GM10248 (cell line): ENCODE measurements at regions of chr12 and their contacts with region 1.

Region 1: DNA sequence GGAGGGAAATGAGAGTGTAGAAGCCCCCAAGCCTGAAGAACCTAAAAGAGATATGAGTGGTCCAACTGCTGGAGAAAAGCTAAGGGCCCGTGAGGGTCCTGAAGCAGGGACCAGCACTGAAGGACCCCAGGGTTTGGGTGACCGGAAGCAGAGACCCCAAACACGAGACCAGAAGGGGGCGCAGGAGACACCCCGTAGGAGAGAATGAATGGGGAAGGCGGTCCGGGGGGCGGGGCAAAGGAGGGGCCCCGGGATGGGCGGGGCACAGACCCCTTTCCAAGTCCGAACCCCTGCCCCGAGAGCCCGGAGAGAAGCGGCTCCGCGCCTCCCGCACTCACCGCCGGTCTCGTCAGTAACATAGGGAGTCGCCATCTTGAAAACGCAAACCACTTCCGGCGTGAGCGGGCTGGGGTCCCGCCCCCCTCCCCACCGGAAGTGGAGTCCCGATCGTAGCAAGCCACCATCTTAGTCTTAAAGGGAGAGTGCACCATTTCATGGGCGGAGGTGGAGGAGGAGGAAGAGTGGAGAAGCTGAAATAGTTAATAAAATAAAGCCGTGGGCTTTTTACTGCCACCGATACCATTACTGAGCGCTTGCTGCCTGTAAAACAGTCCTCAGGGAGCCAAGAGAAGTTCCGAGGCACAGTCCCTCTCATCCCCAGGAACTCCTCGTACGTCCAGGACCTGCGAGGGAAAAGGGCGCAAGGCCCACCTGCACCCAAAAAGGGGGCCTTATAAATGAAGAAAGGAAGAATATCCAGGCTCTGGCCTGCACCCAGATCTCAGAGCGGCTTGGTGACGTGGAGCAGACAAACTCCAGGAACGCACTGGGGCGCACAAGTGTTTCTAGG is 731 bp downstream of the PYM1 start:
- DNase-seq: peak; percentile 91
- CTCF ChIP-seq: peak; percentile 72

Region 2: GRCh38 chr12:55707841-55708694 is 218.9 kb before region 1 on chr12 and contains the start of gene ITGA7:
- CTCF ChIA-PET with region 1: no interaction called
- POLR2A ChIA-PET with region 1: no interaction called
- DNase-seq: peak; percentile 81
- CTCF ChIP-seq: no peak

Region 3: GRCh38 chr12:55829967-55830600 is 96.9 kb before region 1 on chr12:
- CTCF ChIA-PET with region 1: interaction called, 14 read pairs
- POLR2A ChIA-PET with region 1: interaction called, 4 read pairs
- DNase-seq: peak; percentile 51
- CTCF ChIP-seq: no peak

Region 4: DNA sequence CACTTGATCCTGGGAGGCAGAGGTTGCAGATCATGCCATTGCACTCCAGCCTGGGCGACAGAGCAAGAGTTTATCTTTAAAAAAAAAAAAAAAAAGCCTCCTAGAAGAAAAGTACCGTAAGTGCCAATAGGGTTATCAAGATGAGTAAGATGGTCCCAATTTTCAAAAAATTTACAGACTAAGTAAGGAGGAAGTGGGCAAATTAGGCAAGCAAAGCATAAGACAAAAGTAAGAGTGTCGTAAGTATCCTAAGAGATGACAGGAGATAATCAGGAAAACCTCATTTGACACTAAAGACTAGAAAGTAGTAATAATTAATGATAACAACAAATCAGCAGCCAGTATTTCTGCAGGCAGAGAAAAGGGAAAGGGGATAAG is 11.5 kb before region 1 on chr12:
- CTCF ChIA-PET with region 1: interaction called, 41 read pairs
- POLR2A ChIA-PET with region 1: no interaction called
- DNase-seq: no peak
- CTCF ChIP-seq: no peak

Region 5: DNA sequence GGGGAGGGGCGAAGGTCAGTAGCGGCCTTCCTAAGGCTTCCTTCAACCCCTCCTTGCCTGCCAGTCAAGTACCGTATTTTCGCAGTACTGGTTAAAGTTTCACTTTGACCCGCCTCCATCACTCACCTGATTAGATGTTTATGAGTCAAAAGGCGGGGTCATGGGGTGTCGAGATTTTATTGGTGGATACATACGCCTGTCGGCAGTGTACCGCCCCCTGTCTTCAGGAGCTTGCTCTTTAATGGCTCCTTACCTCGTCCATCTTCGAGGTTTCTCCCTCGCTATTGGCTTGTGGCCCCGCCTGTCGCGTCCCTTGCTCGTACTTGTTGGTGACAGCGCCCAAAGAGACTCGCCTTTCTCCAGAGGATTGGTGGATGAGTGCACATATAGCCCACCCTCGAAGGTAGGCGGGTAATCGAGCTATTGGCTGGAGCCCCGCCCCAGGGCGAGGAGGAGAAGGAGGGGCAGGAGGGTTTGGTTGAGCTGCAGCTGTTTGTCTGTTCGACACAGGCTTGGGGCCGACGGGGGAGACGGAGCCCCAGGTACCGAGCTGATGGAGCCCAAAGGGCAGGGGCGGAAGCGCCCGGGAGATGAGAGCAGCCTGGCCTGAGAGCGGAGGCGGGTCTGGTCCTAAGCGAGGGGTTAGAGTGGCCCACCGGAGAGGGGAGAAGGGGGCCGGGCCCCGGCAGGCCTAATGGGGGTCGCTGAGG is 46.8 kb after region 1 on chr12 and contains the start of gene RAB5B:
- CTCF ChIA-PET with region 1: interaction called, 12 read pairs
- POLR2A ChIA-PET with region 1: interaction called, 8 read pairs
- DNase-seq: peak; percentile 94
- CTCF ChIP-seq: no peak